Caco-2 (cell line): ENCODE measurements at regions of chr18 and their contacts with region 1.

Region 1: DNA sequence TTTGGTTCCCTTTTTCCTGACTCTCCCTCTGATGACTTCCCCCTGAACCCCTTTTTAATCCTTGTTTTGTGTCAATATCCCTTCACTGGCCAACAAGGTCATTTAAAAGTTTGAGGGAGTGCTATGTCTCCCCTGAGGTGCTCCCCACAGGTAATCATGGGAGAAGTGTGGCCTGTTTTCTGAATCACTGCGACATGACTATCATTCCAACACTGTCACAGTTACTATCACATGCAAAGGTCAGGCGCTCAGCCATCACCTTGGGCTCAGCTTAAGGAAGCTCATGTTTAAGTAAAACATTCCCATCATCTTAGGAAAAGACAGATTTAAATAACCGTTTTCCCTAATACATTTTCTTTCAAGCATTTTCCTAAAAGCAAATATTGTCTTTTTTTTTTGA is 20.9 kb upstream of the ACAA2 start:
- DNase-seq: no peak
- H3K4me3 ChIP-seq: no peak overlapping the region
- H3K4me3 Mint-ChIP-seq: no peak overlapping the region
- H3K27ac Mint-ChIP-seq: peak overlapping the region; percentile 73
- H3K4me1 ChIP-seq: peaks cover 43% of the 10 kb centered on the region
- H3K4me1 Mint-ChIP-seq: no peaks in the 10 kb centered on the region
- H3K27me3 ChIP-seq: no peaks in the 10 kb centered on the region
- H3K27me3 Mint-ChIP-seq: no peaks in the 10 kb centered on the region
- CTCF ChIP-seq: no peak

Region 2: GRCh38 chr18:49645841-49646351 is 188.4 kb before region 1 on chr18:
- CTCF ChIA-PET with region 1: no interaction called
- POLR2A ChIA-PET with region 1: no interaction called
- intact Hi-C with region 1: no loop called
- DNase-seq: no peak
- H3K4me3 ChIP-seq: no peak overlapping the region
- H3K4me3 Mint-ChIP-seq: no peak overlapping the region
- H3K27ac Mint-ChIP-seq: no peak overlapping the region
- H3K4me1 ChIP-seq: peaks cover 11% of the 10 kb centered on the region; the same call in 1 of the 2 replicates
- H3K4me1 Mint-ChIP-seq: peaks cover 6% of the 10 kb centered on the region
- H3K27me3 ChIP-seq: no peaks in the 10 kb centered on the region
- H3K27me3 Mint-ChIP-seq: no peaks in the 10 kb centered on the region
- CTCF ChIP-seq: no peak

Region 3: DNA sequence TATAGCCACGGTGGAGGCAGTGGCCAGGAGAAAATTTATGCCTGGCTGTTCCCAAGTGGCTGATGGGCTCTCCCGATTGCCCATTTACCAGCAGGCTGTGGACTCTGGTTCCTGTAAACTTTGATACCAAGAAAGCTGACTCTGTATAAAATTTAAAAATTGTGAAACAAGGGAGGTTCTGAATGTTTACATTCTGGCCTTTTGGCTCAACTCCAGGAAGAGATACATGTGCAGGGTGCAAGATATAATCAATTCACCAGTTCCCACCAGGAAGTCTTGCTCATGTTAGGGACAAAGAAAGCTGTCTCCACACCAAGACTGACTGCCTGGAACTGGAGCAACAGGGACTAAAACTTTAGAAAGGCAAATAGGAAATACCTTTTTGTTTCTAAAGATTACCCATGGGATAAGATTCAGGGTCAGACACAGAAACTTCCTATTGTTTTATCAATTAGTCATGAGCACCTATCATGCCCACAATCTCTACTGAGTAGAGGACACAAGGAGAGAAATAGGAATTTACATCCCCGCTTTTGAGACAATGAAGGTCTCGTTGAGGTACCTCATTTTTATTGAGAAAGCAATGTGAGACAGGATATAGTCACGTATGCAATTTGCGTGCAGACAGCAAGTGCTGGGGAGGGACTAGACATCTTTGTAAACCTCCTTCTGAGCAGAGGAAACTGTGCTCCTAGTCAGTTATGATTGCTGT is 148.9 kb before region 1 on chr18:
- CTCF ChIA-PET with region 1: no interaction called
- POLR2A ChIA-PET with region 1: no interaction called
- intact Hi-C with region 1: no loop called
- DNase-seq: no peak
- H3K4me3 ChIP-seq: no peak overlapping the region
- H3K4me3 Mint-ChIP-seq: no peak overlapping the region
- H3K27ac Mint-ChIP-seq: no peak overlapping the region
- H3K4me1 ChIP-seq: no peaks in the 10 kb centered on the region; the same call in none of the 2 replicates
- H3K4me1 Mint-ChIP-seq: no peaks in the 10 kb centered on the region
- H3K27me3 ChIP-seq: no peaks in the 10 kb centered on the region
- H3K27me3 Mint-ChIP-seq: no peaks in the 10 kb centered on the region
- CTCF ChIP-seq: no peak

Region 4: DNA sequence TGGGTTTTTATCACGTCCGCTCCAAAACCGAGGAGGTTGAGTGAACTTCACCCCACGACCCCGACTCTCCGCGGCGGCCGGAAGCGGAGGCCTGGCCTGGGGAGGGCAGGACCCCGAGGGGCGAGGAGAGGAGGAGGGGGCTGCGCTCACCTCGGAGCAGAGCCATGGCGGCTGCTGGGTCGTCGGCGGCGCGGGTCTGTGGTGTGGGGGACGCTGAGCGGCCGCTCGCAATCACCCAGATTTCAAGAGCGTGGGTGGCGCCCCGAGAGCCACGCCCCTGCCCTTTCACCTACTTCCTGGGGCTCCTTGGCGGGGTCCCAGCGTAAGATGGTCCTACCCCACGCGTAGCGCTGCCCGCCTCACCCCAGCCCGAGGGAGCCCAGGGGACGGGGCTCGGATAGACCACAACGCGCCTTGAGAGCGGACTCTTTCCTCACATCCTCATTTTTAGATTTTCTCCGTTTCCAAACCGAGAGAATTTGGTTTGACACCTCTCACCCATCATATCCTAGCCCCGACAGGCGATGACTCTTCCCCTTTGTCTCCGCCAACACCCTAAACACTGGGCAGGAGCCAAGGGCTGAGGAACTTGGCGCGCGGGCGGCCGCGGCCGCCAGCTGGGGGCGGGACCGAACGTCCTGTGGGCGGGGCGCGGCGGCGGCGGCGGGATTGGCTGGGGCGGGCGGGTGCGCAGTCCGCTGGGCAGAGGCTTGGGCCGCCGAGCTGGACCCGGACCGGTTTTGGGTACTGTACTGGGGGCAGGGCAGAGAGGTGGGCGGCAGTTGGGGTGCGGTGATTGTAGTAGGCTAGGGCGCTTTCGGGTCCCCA is 20.7 kb before region 1 on chr18 and contains the start of gene ACAA2:
- CTCF ChIA-PET with region 1: no interaction called
- POLR2A ChIA-PET with region 1: interaction called, 8 read pairs
- intact Hi-C with region 1: loop called (anchors 2 kb)
- DNase-seq: peak; percentile 70 to 78
- H3K4me3 ChIP-seq: peak within 1 kb of the TSS; percentile 78
- H3K4me3 Mint-ChIP-seq: peak within 1 kb of the TSS; percentile 85
- H3K27ac Mint-ChIP-seq: peak within 1 kb of the TSS; percentile 89
- H3K4me1 ChIP-seq: peaks cover 20% of the 10 kb centered on the region
- H3K4me1 Mint-ChIP-seq: peaks cover 34% of the 10 kb centered on the region
- H3K27me3 ChIP-seq: no peaks in the 10 kb centered on the region
- H3K27me3 Mint-ChIP-seq: no peaks in the 10 kb centered on the region
- CTCF ChIP-seq: no peak
- total RNA-seq, gene ACAA2: 188 and 207 TPM in 2 replicates